H1 (cell line): ENCODE measurements at regions of chr14 and their contacts with region 1.

Region 1: GRCh38 chr14:93939304-93940229 is 12.4 kb downstream of the FAM181A start:
- DNase-seq: peak; percentile 78 to 99
- H3K4me3 ChIP-seq: peak overlapping the region; percentile 36 to 53 (median 40)
- H3K27ac ChIP-seq: no peak overlapping the region
- H3K4me1 ChIP-seq: peaks cover 0 to 14% (median 8%) of the 10 kb centered on the region in 4 experiments; a peak in 4 of 7 replicates
- H3K27me3 ChIP-seq: peaks cover 7 to 25% (median 17%) of the 10 kb centered on the region in 4 experiments
- CTCF ChIP-seq: peak; percentile 74 to 98 (median 83)
- EP300 ChIP-seq: 0 out of 3 replicates have a peak, but pooled peaks of 1 of the 2 experiments have one; percentile 48
- POLR2A ChIP-seq: no peak
- RAD21 ChIP-seq: peak; percentile 73 to 82

Region 2: DNA sequence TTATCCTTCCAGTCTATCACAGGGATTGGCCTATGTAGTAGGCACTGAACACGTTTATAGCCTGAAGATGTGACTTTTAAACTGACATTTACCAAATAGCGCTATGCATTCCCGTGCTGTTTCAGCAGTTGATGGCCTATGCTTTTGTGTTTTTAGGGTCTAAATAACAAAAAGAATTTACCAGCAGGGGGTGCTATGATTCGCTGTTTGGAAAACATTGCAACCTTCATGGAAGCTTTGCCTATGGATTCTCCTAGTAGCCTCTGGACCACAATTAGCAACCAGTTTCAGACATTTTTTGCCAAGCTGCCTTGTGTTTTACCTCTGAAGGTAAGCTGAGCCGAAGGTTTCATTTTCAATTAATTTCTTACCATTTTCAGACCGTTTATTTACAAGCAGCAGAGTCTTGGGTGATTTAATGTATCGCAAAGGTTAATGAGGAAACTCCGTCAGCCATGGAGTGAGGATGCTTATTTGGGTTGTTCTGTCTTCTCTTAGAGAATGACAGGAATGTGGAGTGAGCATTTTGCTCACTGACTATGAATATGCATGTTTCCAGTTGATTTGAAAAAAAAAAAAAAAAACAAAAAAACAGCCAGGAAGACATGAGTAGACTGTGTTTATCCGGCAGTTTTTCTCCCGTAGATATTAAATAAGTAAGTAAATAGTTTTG is 284.4 kb before region 1 on chr14:
- CTCF ChIA-PET with region 1: interaction called, 16 read pairs
- POLR2A ChIA-PET with region 1: no interaction called
- DNase-seq: peak in 1 of 2 experiments; percentile 45
- H3K4me3 ChIP-seq: no peak overlapping the region
- H3K27ac ChIP-seq: no peak overlapping the region
- H3K4me1 ChIP-seq: peaks cover 0 to 8% (median 0%) of the 10 kb centered on the region in 4 experiments; a peak in 2 of 7 replicates
- H3K27me3 ChIP-seq: no peaks in the 10 kb centered on the region
- CTCF ChIP-seq: peak in 2 of 3 experiments; percentile 49 to 56; a peak in 3 of 4 replicates
- EP300 ChIP-seq: no peak
- POLR2A ChIP-seq: no peak
- RAD21 ChIP-seq: peak; percentile 77 to 80

Region 3: GRCh38 chr14:93914278-93914677 is 25.3 kb before region 1 on chr14:
- CTCF ChIA-PET with region 1: interaction called, 11 read pairs
- POLR2A ChIA-PET with region 1: no interaction called
- DNase-seq: no peak
- H3K4me3 ChIP-seq: no peak overlapping the region
- H3K27ac ChIP-seq: no peak overlapping the region
- H3K4me1 ChIP-seq: no peaks in the 10 kb centered on the region
- H3K27me3 ChIP-seq: no peaks in the 10 kb centered on the region
- CTCF ChIP-seq: no peak
- EP300 ChIP-seq: no peak
- POLR2A ChIP-seq: no peak
- RAD21 ChIP-seq: no peak

Region 4: DNA sequence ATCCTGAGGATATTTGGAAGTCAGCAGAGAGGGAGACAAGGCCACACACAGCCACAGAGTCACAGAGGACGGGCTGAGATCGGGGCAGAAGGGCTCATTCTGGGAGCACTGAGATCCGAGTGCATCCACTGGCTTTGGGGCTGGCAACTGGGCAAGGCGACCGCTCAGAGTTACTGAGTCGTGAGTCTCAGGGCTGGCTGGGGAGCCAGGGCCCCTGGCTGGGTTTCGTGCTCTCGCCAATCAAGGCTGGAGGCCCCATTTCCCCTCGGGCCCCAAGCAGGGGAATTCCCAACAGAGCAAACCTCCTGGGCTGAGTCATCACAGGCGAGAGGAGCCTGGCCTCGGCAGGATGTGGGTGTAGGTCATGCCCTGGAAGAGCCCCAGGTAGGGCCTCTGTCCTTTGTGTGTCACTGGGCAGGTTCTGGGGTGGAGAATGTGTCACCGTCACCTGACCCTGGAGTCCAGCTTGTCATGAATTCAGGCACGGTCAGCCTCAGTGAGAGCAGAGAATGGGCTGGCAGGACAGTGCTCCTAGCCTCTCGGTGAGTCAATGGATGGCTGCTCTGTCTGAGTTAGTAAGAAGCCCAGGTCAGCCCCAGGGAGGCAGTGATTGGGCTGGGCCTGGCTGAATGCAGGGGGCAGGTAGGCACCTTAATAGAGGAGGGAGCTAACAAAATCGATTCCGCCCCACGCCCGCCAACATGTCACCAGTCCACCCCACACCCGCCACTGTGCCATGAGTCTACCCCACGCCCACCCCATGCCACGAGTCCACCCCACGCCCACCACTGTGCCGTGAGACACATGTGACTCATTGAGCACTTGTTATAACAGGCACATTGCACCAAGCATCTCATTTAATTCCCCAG is 19.9 kb after region 1 on chr14:
- CTCF ChIA-PET with region 1: interaction called, 37 read pairs
- POLR2A ChIA-PET with region 1: interaction called, 3 read pairs
- DNase-seq: peak in 1 of 2 experiments; percentile 61
- H3K4me3 ChIP-seq: no peak overlapping the region
- H3K27ac ChIP-seq: no peak overlapping the region; the same call in 1 of the 2 replicates
- H3K4me1 ChIP-seq: peaks cover 0 to 9% (median 7%) of the 10 kb centered on the region in 4 experiments; a peak in 5 of 7 replicates
- H3K27me3 ChIP-seq: peaks cover 0 to 1% (median 0%) of the 10 kb centered on the region in 4 experiments; a peak in 1 of 7 replicates
- CTCF ChIP-seq: no peak
- EP300 ChIP-seq: no peak
- POLR2A ChIP-seq: no peak
- RAD21 ChIP-seq: no peak

Region 5: GRCh38 chr14:93984987-93985410 is 45.4 kb after region 1 on chr14:
- CTCF ChIA-PET with region 1: interaction called, 484 read pairs
- POLR2A ChIA-PET with region 1: no interaction called
- DNase-seq: peak in 1 of 2 experiments; percentile 65
- H3K4me3 ChIP-seq: no peak overlapping the region
- H3K27ac ChIP-seq: no peak overlapping the region
- H3K4me1 ChIP-seq: peaks cover 0 to 14% (median 8%) of the 10 kb centered on the region in 4 experiments; a peak in 4 of 7 replicates
- H3K27me3 ChIP-seq: no peaks in the 10 kb centered on the region; a peak in 1 of 7 replicates
- CTCF ChIP-seq: peak; percentile 50 to 64 (median 62)
- EP300 ChIP-seq: no peak
- POLR2A ChIP-seq: no peak
- RAD21 ChIP-seq: peak; percentile 11 to 50; a peak in 2 of 4 replicates

Region 6: GRCh38 chr14:94036313-94037050 is 96.9 kb after region 1 on chr14:
- CTCF ChIA-PET with region 1: interaction called, 32 read pairs
- POLR2A ChIA-PET with region 1: no interaction called
- DNase-seq: peak; percentile 60 to 91
- H3K4me3 ChIP-seq: no peak overlapping the region
- H3K27ac ChIP-seq: no peak overlapping the region
- H3K4me1 ChIP-seq: peaks cover 0 to 9% (median 0%) of the 10 kb centered on the region in 4 experiments; a peak in 2 of 7 replicates
- H3K27me3 ChIP-seq: no peaks in the 10 kb centered on the region
- CTCF ChIP-seq: peak; percentile 81 to 97 (median 97)
- EP300 ChIP-seq: no peak
- POLR2A ChIP-seq: no peak
- RAD21 ChIP-seq: peak; percentile 64 to 72

Region 7: GRCh38 chr14:94059998-94060397 is 120.4 kb after region 1 on chr14:
- CTCF ChIA-PET with region 1: no interaction called
- POLR2A ChIA-PET with region 1: no interaction called
- DNase-seq: no peak
- H3K4me3 ChIP-seq: no peak overlapping the region
- H3K27ac ChIP-seq: no peak overlapping the region
- H3K4me1 ChIP-seq: peaks cover 0 to 2% (median 0%) of the 10 kb centered on the region in 4 experiments; a peak in 1 of 7 replicates
- H3K27me3 ChIP-seq: no peaks in the 10 kb centered on the region
- CTCF ChIP-seq: no peak
- EP300 ChIP-seq: no peak
- POLR2A ChIP-seq: no peak
- RAD21 ChIP-seq: no peak